Common myeloid progenitor, CD34-positive (primary cell): ENCODE measurements at regions of chr2 and their contacts with region 1.

Region 1: GRCh38 chr2:102050854-102051391 is 59.2 kb downstream of the IL1R2 start:
- DNase-seq: no peak
- H3K4me3 ChIP-seq: no peak overlapping the region
- H3K27ac ChIP-seq: no peak overlapping the region
- H3K4me1 ChIP-seq: peaks cover 0 to 8% (median 7%) of the 10 kb centered on the region in 4 experiments
- H3K27me3 ChIP-seq: peaks cover 0 to 1% (median 0%) of the 10 kb centered on the region in 5 experiments

Region 2: DNA sequence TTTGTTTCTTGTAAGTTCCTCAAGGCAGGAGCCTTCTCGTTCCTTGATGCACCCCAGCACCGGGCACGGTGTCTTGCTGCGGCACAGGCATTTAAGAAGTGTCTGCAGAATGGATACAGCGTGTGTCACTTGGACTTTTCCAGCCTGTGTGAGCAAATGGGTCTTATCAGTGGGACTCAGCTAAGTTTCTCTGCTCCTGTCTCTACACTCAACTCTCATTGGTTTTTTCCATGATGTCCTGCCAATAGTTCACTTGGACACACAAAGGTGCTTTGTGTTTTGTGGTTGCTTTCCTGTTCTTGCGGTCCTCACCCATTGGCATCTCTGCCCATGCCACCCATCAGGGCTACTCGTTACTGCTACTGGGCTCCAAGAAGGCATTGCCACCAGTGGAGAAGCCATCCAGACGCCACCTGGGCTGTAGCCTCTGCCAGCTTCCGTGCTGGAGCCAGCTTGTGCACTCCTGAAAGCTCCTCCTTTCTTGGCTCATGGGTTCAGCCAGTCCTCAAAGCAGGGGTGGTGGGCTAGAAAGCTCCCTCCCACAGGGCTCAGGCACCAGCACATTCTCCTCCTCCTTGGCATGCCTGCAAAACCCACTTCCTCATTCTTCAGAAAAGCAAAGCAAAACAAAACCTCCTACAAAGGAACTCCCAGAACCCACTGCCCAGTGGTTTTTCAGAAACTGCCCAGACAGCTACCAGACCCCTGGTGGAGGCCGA is 17.7 kb before region 1 on chr2:
- CTCF ChIA-PET with region 1: interaction called, 11 read pairs
- POLR2A ChIA-PET with region 1: no interaction called
- DNase-seq: peak; percentile 76 to 94 (median 92)
- H3K4me3 ChIP-seq: peak overlapping the region in 4 of 7 experiments; percentile 7 to 59 (median 44)
- H3K27ac ChIP-seq: no peak overlapping the region
- H3K4me1 ChIP-seq: peaks cover 14 to 48% (median 35%) of the 10 kb centered on the region in 4 experiments
- H3K27me3 ChIP-seq: no peaks in the 10 kb centered on the region

Region 3: DNA sequence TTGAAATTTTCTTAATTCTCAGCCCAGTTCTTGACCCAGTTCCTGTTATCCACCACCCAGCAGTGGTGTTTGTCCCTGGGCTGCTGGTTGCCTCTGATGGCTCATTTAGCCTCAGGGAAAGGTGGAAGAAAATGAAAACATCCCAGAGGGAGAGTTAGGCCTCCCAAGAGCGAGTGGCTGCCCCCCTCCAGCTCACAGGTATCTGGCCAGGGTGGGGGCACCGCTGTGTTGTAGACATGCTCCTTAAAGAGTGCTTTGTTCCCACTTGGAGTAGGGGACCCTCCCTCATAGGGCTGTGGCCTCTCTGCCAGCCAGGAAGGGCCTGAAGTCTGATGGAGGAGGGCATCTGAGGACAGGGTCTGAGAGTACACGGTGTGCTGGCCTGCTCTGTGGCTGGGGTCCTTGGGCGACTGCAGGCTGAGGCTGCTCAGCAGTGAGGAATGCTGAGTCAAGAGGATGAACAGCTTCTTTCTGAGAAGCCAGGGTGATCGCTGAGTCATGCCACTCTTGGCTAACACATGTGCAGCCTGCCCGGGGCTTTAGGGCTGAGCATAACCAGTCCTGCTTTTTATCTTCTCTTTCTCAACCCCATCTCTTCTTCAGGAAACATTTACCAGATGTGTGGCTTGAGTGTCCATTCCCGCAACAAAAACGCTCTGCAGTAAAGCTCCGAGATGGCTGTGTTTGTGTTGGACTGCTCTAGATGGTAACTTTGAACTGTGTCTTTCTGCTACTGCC is 13.2 kb after region 1 on chr2:
- CTCF ChIA-PET with region 1: interaction called, 10 read pairs
- POLR2A ChIA-PET with region 1: no interaction called
- DNase-seq: peak; percentile 83 to 95 (median 94)
- H3K4me3 ChIP-seq: peak overlapping the region in 2 of 7 experiments; percentile 12 to 42
- H3K27ac ChIP-seq: peak overlapping the region in 1 of 2 experiments; percentile 72
- H3K4me1 ChIP-seq: peaks cover 7 to 42% (median 24%) of the 10 kb centered on the region in 4 experiments
- H3K27me3 ChIP-seq: no peaks in the 10 kb centered on the region

Region 4: DNA sequence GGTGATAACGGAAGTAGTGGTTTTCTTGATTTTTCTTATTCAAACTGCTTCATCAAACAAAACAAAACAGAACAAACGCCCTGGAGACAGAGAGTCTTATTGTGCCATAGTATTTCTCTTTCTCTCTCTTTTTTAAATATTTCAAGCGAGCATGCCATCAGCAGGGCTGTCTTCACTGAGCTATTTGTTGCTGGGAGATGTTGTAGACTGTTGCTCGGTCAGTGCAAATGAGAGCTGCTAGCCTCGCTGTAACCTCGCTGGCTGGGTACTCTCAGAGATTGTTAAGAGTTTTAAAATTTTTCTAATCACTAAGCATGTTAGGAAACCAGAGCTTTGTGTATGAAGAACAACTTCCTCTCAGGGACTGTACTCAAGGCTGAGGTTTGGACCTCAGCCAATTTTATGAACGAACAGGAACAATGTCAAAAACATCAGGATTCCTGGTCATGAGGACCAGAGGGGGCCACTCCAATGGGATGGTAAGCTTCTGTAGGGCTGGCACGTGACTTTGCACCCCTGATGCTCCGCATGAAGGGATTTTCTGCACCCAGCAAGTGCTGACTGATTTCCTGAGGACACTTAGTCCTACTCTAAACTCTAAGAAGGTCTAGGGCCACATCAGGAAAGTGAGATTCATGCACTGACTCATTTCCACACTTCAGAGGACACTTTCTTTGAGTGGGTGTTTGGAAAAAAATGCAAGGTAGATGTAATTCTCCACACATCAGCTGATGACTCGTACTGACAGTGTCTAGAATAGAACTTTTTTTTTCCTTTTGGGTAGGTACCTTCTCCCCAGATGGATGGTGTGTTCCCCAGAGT is 31.9 kb after region 1 on chr2:
- CTCF ChIA-PET with region 1: no interaction called
- POLR2A ChIA-PET with region 1: no interaction called
- DNase-seq: peak; percentile 86 to 94 (median 94)
- H3K4me3 ChIP-seq: peak overlapping the region in 3 of 7 experiments; percentile 34 to 51 (median 37)
- H3K27ac ChIP-seq: peak overlapping the region in 1 of 2 experiments; percentile 14
- H3K4me1 ChIP-seq: peaks cover 13 to 36% (median 28%) of the 10 kb centered on the region in 4 experiments
- H3K27me3 ChIP-seq: peaks cover 0 to 6% (median 3%) of the 10 kb centered on the region in 5 experiments